ENCODE measurements at regions of chr19 and their contacts with region 1.

Region 1: GRCh38 chr19:55146078-55146704 is 2.8 kb downstream of the TNNT1 start:
- DNase-seq: peak; percentile 29
- H3K4me3 ChIP-seq: peak overlapping the region; percentile 48 to 54 (median 51)
- H3K27ac ChIP-seq: no peak overlapping the region
- H3K4me1 ChIP-seq: peaks cover 5% of the 10 kb centered on the region
- H3K27me3 ChIP-seq: no peaks in the 10 kb centered on the region
- CTCF ChIP-seq: peak; percentile 54 to 84

Region 2: DNA sequence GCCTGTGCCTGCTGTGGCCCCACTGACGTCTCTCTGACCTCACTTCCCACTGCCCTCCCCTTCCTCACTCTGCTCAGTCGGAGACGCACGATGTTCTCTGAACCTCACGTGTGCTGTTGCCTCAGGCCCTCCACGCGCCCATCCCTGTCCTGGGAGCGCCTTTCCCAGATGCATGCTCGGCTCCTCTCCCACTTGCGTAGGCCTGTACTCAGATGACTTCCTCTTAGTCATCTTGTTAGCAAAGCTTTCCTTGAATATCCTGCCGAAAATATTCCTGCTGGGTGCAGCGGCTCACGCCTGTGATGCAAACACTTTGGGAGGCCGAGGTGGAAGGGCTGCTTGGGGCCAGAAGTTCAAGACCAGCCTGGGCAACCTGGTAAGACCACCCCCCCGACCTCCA is 43.2 kb after region 1 on chr19:
- CTCF ChIA-PET with region 1: no interaction called
- dilution Hi-C with region 1: no loop called
- in situ Hi-C with region 1: no loop called
- intact Hi-C with region 1: loop called (anchors 1 kb)
- DNase-seq: peak; percentile 100
- H3K4me3 ChIP-seq: no peak overlapping the region
- H3K27ac ChIP-seq: peak overlapping the region; percentile 87
- H3K4me1 ChIP-seq: peaks cover 9% of the 10 kb centered on the region
- H3K27me3 ChIP-seq: no peaks in the 10 kb centered on the region
- CTCF ChIP-seq: no peak

Region 3: GRCh38 chr19:55289117-55289796 is 143.1 kb after region 1 on chr19:
- CTCF ChIA-PET with region 1: no interaction called
- dilution Hi-C with region 1: no loop called
- in situ Hi-C with region 1: no loop called
- intact Hi-C with region 1: loop called (anchors 1 kb)
- DNase-seq: no peak
- H3K4me3 ChIP-seq: no peak overlapping the region
- H3K27ac ChIP-seq: no peak overlapping the region
- H3K4me1 ChIP-seq: no peaks in the 10 kb centered on the region
- H3K27me3 ChIP-seq: no peaks in the 10 kb centered on the region
- CTCF ChIP-seq: no peak

Region 4: GRCh38 chr19:55418185-55418584 is 272.0 kb after region 1 on chr19:
- CTCF ChIA-PET with region 1: interaction called, 3 read pairs
- dilution Hi-C with region 1: no loop called
- in situ Hi-C with region 1: loop called (anchors 25 kb)
- intact Hi-C with region 1: loop called (anchors 1 kb)
- DNase-seq: peak; percentile 69
- H3K4me3 ChIP-seq: no peak overlapping the region
- H3K27ac ChIP-seq: no peak overlapping the region
- H3K4me1 ChIP-seq: no peaks in the 10 kb centered on the region
- H3K27me3 ChIP-seq: peaks cover 3% of the 10 kb centered on the region
- CTCF ChIP-seq: peak; percentile 75 to 77

Region 5: DNA sequence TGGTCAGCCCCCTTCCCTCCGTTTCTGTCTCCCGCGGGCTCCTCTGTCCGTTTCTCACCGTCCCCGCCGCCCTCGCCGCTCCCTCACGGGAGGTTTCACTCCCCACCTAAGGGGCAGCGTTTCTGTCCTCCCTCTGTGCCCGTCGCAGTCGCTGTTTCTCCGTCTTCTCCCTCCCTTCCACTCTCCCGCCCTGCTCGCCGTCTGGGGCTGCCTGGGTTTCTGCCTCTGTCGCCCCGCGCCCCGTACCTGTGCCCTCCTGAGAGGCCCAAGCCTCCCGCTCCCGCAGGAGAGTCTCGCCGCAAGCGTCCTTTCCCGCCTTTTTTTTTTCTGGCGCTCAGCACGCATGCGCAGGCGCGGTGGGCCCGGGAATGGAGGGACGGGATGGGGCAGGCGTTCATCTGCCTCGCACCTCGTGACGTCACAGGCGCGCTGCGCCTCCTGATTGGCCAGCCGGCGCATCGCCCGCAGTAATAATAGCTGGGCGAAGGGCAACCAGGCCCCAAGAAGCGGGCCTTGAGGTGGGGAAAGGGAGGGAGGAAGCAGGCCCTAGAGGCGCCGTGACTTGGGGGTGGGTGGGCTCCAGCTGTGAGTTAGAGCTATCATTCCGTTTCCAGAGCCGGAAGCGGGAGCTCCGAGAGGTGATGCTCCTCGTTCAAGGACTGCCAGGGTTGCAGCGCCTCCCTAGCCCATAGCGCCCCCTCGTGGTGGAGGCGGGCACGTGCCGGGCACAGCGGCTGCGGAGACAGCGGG is 357.5 kb after region 1 on chr19:
- CTCF ChIA-PET with region 1: interaction called, 6 read pairs
- dilution Hi-C with region 1: no loop called
- in situ Hi-C with region 1: loop called in 1 of 2 experiments (anchors 10 kb)
- intact Hi-C with region 1: loop called (anchors 1 kb)
- DNase-seq: peak; percentile 84
- H3K4me3 ChIP-seq: peak overlapping the region; percentile 41 to 46 (median 42)
- H3K27ac ChIP-seq: no peak overlapping the region
- H3K4me1 ChIP-seq: peaks cover 9% of the 10 kb centered on the region
- H3K27me3 ChIP-seq: no peaks in the 10 kb centered on the region
- CTCF ChIP-seq: peak; percentile 78 to 96

Measured in mammary epithelial cell (primary cell).